Breast epithelium (tissue), 4 donors: ENCODE measurements at regions of chr9 and their contacts with region 1.

Region 1: GRCh38 chr9:96038914-96039313 is 163.4 kb downstream of the ERCC6L2 start:
- DNase-seq: no peak
- H3K4me3 ChIP-seq: no peak overlapping the region
- H3K27ac ChIP-seq: no peak overlapping the region
- H3K4me1 ChIP-seq: no peaks in the 10 kb centered on the region
- H3K27me3 ChIP-seq: no peaks in the 10 kb centered on the region
- CTCF ChIP-seq: no peak
- POLR2A ChIP-seq: no peak

Region 2: DNA sequence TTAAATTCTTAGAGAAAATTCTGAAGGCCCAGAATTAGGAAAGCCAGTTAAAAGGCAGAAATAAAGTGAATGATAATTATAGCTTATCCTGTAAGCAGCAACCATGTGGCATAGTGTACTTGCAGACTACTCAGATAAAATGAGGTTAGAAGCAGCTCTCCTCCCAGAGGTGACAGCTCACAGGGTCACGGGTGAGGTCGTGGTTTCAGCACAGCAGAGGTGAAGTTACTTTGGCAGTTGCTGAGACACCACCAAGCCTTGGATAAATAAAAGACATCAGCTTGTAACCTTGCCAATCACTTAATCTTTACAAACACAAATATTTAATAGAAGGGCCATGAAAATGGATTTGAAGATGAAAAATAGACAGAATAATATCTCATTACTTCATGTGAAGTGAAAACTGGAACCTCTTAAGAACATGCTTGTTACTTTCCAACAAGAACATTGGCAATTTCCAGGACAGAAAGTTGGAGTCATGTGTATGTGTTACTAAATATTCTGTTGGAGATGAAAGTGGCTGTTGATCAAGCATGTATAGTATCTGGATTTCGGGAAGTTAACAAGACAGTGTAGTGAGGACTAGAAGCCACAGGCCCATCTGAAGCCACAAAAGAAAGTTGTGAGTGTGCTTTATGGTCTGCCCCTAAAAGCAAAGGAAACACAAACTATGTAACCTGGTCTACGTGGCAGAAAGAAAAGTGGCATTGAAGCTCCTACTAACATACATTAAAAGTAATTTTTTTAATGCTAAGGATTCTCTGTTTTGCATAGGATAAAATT is 29.0 kb before region 1 on chr9:
- intact Hi-C with region 1: no loop called
- DNase-seq: no peak
- H3K4me3 ChIP-seq: no peak overlapping the region
- H3K27ac ChIP-seq: no peak overlapping the region
- H3K4me1 ChIP-seq: no peaks in the 10 kb centered on the region
- H3K27me3 ChIP-seq: no peaks in the 10 kb centered on the region
- CTCF ChIP-seq: no peak
- POLR2A ChIP-seq: no peak

Region 3: DNA sequence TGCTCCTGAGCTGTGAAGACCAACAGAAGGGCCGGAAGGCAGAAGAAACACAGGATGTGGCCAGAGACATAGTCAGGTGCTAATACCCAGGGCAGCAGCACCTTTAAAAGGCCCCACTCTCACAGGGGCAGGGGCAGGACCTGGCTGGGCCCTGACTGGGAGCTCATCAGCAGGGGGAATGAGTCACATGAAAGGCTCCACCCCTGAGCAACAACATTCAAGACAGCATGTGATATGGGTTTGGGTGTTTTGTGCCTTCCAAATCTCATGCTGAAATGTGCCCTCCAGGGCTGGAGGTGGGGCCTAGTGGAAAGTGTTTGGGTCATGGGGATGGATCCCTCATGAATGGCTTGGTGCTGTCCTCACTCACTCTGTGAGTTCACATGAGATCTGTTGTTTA is 18.2 kb after region 1 on chr9:
- intact Hi-C with region 1: no loop called
- DNase-seq: no peak
- H3K4me3 ChIP-seq: no peak overlapping the region
- H3K27ac ChIP-seq: no peak overlapping the region
- H3K4me1 ChIP-seq: no peaks in the 10 kb centered on the region
- H3K27me3 ChIP-seq: no peaks in the 10 kb centered on the region
- CTCF ChIP-seq: no peak
- POLR2A ChIP-seq: no peak

Region 4: DNA sequence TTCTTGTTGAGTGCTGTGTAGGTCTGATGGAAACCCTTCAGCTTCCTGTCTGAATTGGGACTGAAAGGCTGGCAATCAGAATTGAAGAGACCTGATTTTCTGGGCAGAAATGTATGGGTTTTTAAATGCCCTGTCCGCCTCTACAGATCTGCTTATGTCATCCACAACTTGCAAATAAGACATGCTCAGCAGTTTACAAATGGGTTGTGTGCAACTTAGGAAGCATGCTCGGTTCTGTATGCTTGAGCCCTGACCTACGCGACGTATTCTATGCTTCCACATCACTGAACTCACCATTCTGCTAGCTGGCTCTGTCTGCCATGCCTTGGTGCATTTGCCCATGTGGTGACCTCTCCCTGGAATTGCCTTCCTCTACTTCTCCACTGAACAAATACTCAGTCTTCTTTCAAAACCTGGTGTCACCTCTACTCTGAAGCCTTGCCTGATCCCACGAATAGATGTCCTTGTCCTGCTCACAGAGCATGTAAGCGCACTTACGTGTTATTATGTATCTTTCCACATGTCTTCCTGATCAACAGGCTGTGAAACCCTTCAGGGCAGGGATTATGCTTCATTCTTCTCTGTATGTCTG is 30.8 kb after region 1 on chr9:
- intact Hi-C with region 1: loop called (anchors 1 kb)
- DNase-seq: no peak
- H3K4me3 ChIP-seq: no peak overlapping the region
- H3K27ac ChIP-seq: no peak overlapping the region
- H3K4me1 ChIP-seq: no peaks in the 10 kb centered on the region
- H3K27me3 ChIP-seq: no peaks in the 10 kb centered on the region
- CTCF ChIP-seq: no peak
- POLR2A ChIP-seq: no peak